HCT116 (cell line): ENCODE measurements at regions of chr10 and their contacts with region 1.

Region 1: DNA sequence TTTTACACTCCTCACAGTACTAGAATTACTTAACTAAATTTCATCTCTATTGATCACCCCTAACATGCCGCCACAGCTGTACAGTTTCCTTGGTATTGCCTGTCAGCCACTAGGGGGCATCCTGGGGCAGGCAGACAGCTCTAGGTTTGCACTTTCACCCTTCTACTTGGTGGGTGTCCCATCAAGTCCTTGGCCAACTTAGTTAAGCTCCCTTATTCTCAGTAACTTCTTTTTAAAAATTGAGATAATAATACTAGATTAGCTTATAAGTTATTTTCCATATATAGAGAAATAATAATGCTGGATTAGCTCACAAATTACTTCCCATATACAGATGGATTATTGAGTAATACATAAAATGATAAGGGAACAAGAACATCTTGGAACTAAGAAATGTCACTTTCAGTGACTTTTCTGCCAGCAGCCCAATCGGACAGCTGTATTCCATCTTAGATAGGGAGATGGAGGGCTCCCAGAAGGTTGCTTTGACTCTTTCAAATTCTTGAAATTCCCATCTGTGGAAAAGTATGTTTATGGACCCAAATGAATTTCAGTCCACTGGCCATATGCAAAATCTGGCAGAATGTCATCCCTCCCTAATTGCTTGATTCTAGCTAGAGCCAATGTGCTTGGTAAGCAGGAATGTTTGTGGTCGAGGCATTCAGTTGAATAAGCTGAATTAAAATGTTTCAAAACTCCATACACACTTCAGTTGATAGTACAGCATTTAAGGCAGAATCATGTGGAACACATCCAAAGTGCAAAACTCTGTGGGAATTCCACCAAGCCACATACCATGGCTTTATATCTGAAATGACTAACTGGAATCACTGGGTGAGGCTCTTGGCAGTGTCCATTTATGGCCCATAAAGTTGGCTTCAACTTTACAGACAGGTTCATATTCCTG is 309.7 kb downstream of the CSTF2T start:
- DNase-seq: peak; percentile 16
- ATAC-seq: peak; percentile 86
- H3K4me3 ChIP-seq: no peak overlapping the region
- H3K27ac ChIP-seq: no peak overlapping the region
- H3K4me1 ChIP-seq: no peaks in the 10 kb centered on the region
- H3K27me3 ChIP-seq: no peaks in the 10 kb centered on the region
- CTCF ChIP-seq: peak; percentile 57 to 93 (median 93)
- POLR2A ChIP-seq: no peak
- RAD21 ChIP-seq: peak; percentile 72

Region 2: GRCh38 chr10:51377932-51378599 is 11.6 kb before region 1 on chr10:
- CTCF ChIA-PET with region 1: interaction called, 11 read pairs
- POLR2A ChIA-PET with region 1: no interaction called
- RAD21 ChIA-PET with region 1: no interaction called
- intact Hi-C with region 1: no loop called
- DNase-seq: no peak
- ATAC-seq: no peak
- H3K4me3 ChIP-seq: no peak overlapping the region
- H3K27ac ChIP-seq: no peak overlapping the region
- H3K4me1 ChIP-seq: no peaks in the 10 kb centered on the region
- H3K27me3 ChIP-seq: peaks cover 2% of the 10 kb centered on the region
- CTCF ChIP-seq: no peak
- POLR2A ChIP-seq: no peak
- RAD21 ChIP-seq: no peak

Region 3: GRCh38 chr10:51960494-51960895 is 570.8 kb after region 1 on chr10:
- CTCF ChIA-PET with region 1: no interaction called
- POLR2A ChIA-PET with region 1: no interaction called
- RAD21 ChIA-PET with region 1: no interaction called
- intact Hi-C with region 1: loop called (anchors 5 kb)
- DNase-seq: peak; percentile 10
- ATAC-seq: peak; percentile 67
- H3K4me3 ChIP-seq: no peak overlapping the region
- H3K27ac ChIP-seq: no peak overlapping the region
- H3K4me1 ChIP-seq: no peaks in the 10 kb centered on the region
- H3K27me3 ChIP-seq: peaks cover 19% of the 10 kb centered on the region; the same call in 1 of the 2 replicates
- CTCF ChIP-seq: peak; percentile 36 to 64 (median 38); a peak in 4 of 6 replicates
- POLR2A ChIP-seq: no peak
- RAD21 ChIP-seq: peak; percentile 52